Natural killer cell (primary cell): ENCODE measurements at regions of chr4 and their contacts with region 1.

Region 1: DNA sequence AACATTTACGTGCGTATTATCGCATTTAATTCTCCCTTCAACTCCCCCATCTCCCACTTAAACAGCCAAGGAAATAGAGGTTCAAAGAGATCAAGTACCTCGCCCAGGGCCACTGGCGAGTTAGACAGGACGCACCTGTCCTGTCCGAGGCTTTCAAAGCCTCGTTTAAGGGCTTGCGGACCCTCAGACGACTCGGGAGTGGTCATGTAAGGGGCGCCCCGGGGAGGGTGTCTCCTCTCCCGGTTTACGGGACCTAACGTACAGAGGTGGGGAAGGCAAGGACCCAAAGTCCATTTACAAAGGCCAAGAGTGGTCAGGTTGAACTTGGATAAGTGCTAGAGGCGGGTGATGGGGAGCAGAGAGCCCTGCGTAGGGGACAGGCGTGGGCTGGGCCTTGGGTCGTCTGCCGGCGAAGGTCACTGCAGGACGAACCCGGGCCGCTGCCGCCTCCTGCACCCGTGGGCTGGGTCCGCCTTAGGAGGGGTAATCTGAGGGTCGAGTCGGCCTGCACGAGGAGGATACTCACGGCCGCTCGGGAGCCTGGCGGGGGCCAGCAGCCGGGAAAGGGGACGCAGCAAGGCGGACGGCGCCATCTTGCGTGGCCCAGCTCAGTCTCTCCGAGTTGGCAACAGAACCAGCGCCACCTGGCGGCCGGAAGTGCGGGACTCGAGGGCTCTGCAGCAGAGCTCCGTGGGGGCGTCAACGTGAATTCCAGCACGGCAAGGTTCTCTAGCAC is 5.9 kb upstream of the NAA15 start:
- DNase-seq: peak; percentile 98 to 99
- ATAC-seq: peak; percentile 94 to 99 (median 97)
- H3K4me3 ChIP-seq: peak overlapping the region; percentile 86
- H3K4me3 Mint-ChIP-seq: peak overlapping the region; percentile 97
- H3K27ac ChIP-seq: peak overlapping the region; percentile 84
- H3K27ac Mint-ChIP-seq: peak overlapping the region; percentile 94 to 96
- H3K4me1 ChIP-seq: peaks cover 10% of the 10 kb centered on the region
- H3K4me1 Mint-ChIP-seq: peaks cover 19 to 23% of the 10 kb centered on the region in 2 donors
- H3K27me3 ChIP-seq: no peaks in the 10 kb centered on the region
- H3K27me3 Mint-ChIP-seq: no peaks in the 10 kb centered on the region
- CTCF ChIP-seq: peak; percentile 95

Region 2: DNA sequence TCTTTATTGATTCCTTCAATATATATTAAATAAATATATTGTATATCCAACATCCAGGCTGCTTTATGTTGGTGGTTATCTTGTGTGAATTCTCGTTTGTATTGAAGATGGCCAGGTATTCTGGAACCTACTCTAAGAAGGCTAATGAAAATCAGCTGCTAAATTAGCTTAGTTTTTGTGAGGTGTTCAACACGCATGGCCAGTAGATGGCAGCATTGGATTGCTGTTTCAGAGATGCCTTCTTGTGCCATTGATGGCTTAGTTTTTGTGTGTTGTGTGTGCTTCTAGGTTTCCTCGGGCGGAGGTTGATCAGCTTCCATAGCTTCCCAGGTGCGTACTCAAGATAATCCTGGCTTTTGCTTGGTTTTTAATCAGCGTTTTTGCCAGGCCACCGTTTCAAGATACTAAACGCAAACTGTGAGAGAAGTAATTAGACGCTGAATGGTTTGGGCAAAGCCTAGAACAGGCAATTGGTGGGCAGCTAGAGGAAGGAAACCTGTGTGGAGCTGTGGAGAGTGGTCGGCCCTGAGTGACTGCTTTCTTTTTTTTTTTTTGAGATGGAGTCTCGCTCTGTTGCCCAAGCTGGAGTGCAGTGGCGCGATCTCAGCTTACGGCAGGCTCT is 264.6 kb before region 1 on chr4:
- intact Hi-C with region 1: loop called (anchors 1 kb)
- DNase-seq: peak; percentile 60 to 92
- ATAC-seq: peak; percentile 70 to 94 (median 82)
- H3K4me3 ChIP-seq: no peak overlapping the region
- H3K4me3 Mint-ChIP-seq: no peak overlapping the region
- H3K27ac ChIP-seq: no peak overlapping the region
- H3K27ac Mint-ChIP-seq: peak overlapping the region; percentile 39 to 73
- H3K4me1 ChIP-seq: peaks cover 5% of the 10 kb centered on the region
- H3K4me1 Mint-ChIP-seq: peaks cover 17 to 25% of the 10 kb centered on the region in 2 donors
- H3K27me3 ChIP-seq: no peaks in the 10 kb centered on the region
- H3K27me3 Mint-ChIP-seq: no peaks in the 10 kb centered on the region
- CTCF ChIP-seq: peak; percentile 84

Region 3: GRCh38 chr4:139099366-139099982 is 195.9 kb before region 1 on chr4:
- intact Hi-C with region 1: loop called (anchors 1 kb)
- DNase-seq: peak; percentile 45 to 92
- ATAC-seq: peak; percentile 80 to 86 (median 86)
- H3K4me3 ChIP-seq: no peak overlapping the region
- H3K4me3 Mint-ChIP-seq: no peak overlapping the region
- H3K27ac ChIP-seq: no peak overlapping the region
- H3K27ac Mint-ChIP-seq: no peak overlapping the region
- H3K4me1 ChIP-seq: no peaks in the 10 kb centered on the region
- H3K4me1 Mint-ChIP-seq: peaks cover 0 to 9% of the 10 kb centered on the region in 2 donors
- H3K27me3 ChIP-seq: no peaks in the 10 kb centered on the region
- H3K27me3 Mint-ChIP-seq: no peaks in the 10 kb centered on the region
- CTCF ChIP-seq: peak; percentile 83

Region 4: DNA sequence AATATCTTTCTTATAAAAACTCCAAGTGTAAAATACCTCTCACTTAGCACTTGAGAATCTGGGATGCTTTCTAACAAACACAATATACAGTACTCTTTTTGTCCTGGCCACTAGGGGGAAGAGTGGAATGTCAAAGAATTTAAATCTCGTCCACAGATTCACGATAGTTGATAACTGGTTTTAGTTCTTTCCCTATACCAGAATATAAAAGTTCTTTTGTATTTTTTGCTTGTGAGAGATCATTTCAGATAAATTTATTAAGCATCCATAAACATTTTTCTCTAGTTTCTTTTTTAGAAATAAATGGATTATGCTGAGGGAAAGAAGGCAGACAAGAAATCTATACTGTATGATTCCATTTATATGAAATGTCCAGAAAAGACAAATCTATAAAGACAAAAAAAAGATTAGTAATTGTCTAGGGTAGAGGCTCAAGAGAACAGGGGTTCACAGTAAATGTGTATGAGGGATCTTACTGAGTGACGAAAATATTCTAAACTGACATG is 65.8 kb before region 1 on chr4:
- intact Hi-C with region 1: loop called (anchors 1 kb)
- DNase-seq: peak in 1 of 2 donors; percentile 75
- ATAC-seq: peak; percentile 62 to 83 (median 82)
- H3K4me3 ChIP-seq: no peak overlapping the region
- H3K4me3 Mint-ChIP-seq: no peak overlapping the region
- H3K27ac ChIP-seq: no peak overlapping the region
- H3K27ac Mint-ChIP-seq: no peak overlapping the region
- H3K4me1 ChIP-seq: no peaks in the 10 kb centered on the region
- H3K4me1 Mint-ChIP-seq: peaks cover 0 to 5% of the 10 kb centered on the region in 2 donors
- H3K27me3 ChIP-seq: no peaks in the 10 kb centered on the region
- H3K27me3 Mint-ChIP-seq: no peaks in the 10 kb centered on the region
- CTCF ChIP-seq: peak; percentile 69